ENCODE measurements at regions of chr12 and their contacts with region 1.

Region 1: GRCh38 chr12:123150744-123151456 is at the start of gene PITPNM2:
- DNase-seq: peak; percentile 73
- H3K4me3 Mint-ChIP-seq: peak within 1 kb of the TSS; percentile 84
- H3K27ac Mint-ChIP-seq: peak within 1 kb of the TSS; percentile 58
- H3K4me1 Mint-ChIP-seq: peaks cover 46% of the 10 kb centered on the region
- H3K27me3 Mint-ChIP-seq: peaks cover 15% of the 10 kb centered on the region

Region 2: GRCh38 chr12:123134271-123134671 is 16.6 kb before region 1 on chr12:
- CTCF ChIA-PET with region 1: no interaction called
- DNase-seq: peak; percentile 14
- H3K4me3 Mint-ChIP-seq: no peak overlapping the region
- H3K27ac Mint-ChIP-seq: no peak overlapping the region
- H3K4me1 Mint-ChIP-seq: peaks cover 49% of the 10 kb centered on the region
- H3K27me3 Mint-ChIP-seq: no peaks in the 10 kb centered on the region

Region 3: DNA sequence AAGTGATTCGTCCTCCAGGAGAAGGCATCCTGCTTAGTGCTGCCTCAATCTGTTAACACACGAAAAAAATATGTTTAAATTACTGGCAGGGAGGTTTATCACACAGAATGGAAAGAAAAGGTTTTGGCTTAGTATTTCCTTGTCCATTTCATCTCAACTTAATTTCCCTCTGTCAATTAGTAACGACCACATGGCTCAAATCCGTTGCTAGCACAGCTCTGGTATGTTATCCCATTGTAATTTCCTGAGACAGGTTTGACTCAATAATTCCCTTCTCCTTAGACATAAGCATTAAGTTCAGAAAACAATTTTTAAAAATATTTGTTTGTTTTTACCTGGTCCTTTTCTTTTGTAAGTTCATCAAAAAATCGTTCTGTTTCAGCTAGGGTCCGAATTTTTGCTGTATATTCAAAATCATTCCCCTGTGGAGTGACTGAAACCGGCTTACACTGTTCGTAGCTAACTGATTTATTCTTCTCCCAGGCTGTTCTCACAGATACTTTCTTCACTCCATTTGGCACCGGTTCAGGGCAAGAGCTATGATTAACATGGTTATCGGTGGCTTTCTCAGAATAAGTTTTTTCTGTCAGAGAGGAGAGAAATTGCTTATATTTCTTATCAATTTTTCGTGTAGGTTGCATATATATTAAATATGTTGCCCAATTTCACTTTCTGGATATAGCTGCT is 10.0 kb after region 1 on chr12:
- CTCF ChIA-PET with region 1: interaction called, 10 read pairs
- DNase-seq: no peak
- H3K4me3 Mint-ChIP-seq: no peak overlapping the region
- H3K27ac Mint-ChIP-seq: no peak overlapping the region
- H3K4me1 Mint-ChIP-seq: no peaks in the 10 kb centered on the region
- H3K27me3 Mint-ChIP-seq: no peaks in the 10 kb centered on the region

Measured in activated naive CD4-positive, alpha-beta T cell treated with anti-CD3 and anti-CD28 coated beads, Interleukin-2, amount 10 ng/mL, durations not matched to agents 7 days and 5 days (primary cell).